Left ventricle myocardium superior (tissue), 1 donor: ENCODE measurements at regions of chr20 and their contacts with region 1.

Region 1: GRCh38 chr20:47317127-47317895 is 39.2 kb downstream of the ZMYND8 start:
- DNase-seq: peak; percentile 77
- ATAC-seq: peak; percentile 62

Region 2: DNA sequence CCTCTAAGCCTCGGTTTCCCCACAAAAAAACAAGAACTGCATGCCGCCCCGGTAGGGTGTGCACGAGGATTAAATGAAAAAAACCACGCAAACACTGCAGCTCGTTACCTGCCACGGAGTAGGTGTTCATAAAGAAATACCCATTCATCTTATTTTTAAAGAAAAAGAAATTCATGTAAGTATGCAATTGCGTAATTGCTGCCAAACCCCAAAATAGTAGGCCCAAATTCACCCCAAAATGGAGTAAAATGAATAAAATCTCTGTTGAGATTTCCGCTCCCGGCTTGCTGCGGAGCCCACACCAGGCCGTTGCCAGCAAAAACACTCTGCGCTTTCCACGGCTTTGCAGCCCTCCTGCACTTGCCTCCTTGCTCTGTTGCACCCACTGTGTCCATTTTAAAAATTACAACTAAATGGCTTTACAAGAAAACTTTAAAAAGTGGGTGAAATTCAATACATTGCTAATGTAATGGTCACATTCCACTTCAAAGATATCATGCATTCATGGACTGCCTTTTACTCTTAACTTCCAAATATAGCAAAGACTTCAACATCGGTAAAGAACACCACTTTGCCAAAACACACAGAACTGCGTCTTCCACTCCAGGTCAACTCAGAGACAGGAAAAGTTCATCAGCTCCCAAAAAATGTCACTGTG is 85.8 kb before region 1 on chr20:
- intact Hi-C with region 1: no loop called
- DNase-seq: no peak
- ATAC-seq: no peak

Region 3: GRCh38 chr20:47356526-47357295 is 39.4 kb after region 1 on chr20 and contains the start of gene ZMYND8:
- intact Hi-C with region 1: loop called (anchors 5 kb)
- DNase-seq: peak; percentile 90
- ATAC-seq: peak; percentile 60
- total RNA-seq, gene ZMYND8: 40.1 TPM